ENCODE measurements at regions of chr18 and their contacts with region 1.

Region 1: GRCh38 chr18:23812546-23813440 is 123.5 kb downstream of the LAMA3 start:
- DNase-seq: no peak
- ATAC-seq: no peak
- H3K4me3 ChIP-seq: no peak overlapping the region
- H3K27ac ChIP-seq: no peak overlapping the region
- H3K4me1 ChIP-seq: no peaks in the 10 kb centered on the region
- H3K27me3 ChIP-seq: no peaks in the 10 kb centered on the region

Region 2: GRCh38 chr18:23515911-23516546 is 296.8 kb before region 1 on chr18:
- intact Hi-C with region 1: loop called (anchors 10 kb)
- DNase-seq: peak; percentile 83 to 84
- ATAC-seq: peak; percentile 94
- H3K4me3 ChIP-seq: no peak overlapping the region
- H3K27ac ChIP-seq: no peak overlapping the region
- H3K4me1 ChIP-seq: no peaks in the 10 kb centered on the region
- H3K27me3 ChIP-seq: no peaks in the 10 kb centered on the region

Region 3: GRCh38 chr18:23529597-23529996 is 283.2 kb before region 1 on chr18:
- intact Hi-C with region 1: loop called in 1 of 2 experiments (anchors 10 kb)
- DNase-seq: no peak
- ATAC-seq: no peak
- H3K4me3 ChIP-seq: no peak overlapping the region
- H3K27ac ChIP-seq: no peak overlapping the region
- H3K4me1 ChIP-seq: no peaks in the 10 kb centered on the region
- H3K27me3 ChIP-seq: no peaks in the 10 kb centered on the region

Region 4: GRCh38 chr18:23619388-23619881 is 193.4 kb before region 1 on chr18:
- intact Hi-C with region 1: loop called (anchors 1 to 5 kb)
- DNase-seq: peak; percentile 57 to 75
- ATAC-seq: peak; percentile 79
- H3K4me3 ChIP-seq: peak overlapping the region in 1 of 2 donors; percentile 56
- H3K27ac ChIP-seq: no peak overlapping the region
- H3K4me1 ChIP-seq: no peaks in the 10 kb centered on the region
- H3K27me3 ChIP-seq: no peaks in the 10 kb centered on the region

Measured in aorta (tissue), 5 donors.